Naive thymus-derived CD4-positive, alpha-beta T cell (primary cell): ENCODE measurements at regions of chr4 and their contacts with region 1.

Region 1: GRCh38 chr4:142126890-142127497 is 490.6 kb downstream of the IL15 start:
- DNase-seq: peak in 8 of 9 donors; percentile 30 to 73 (median 66)
- ATAC-seq: peak; percentile 83
- H3K4me3 ChIP-seq: no peak overlapping the region
- H3K4me3 Mint-ChIP-seq: no peak overlapping the region
- H3K27ac ChIP-seq: no peak overlapping the region
- H3K27ac Mint-ChIP-seq: peak overlapping the region in 1 of 9 donors; percentile 22
- H3K4me1 ChIP-seq: peaks cover 0 to 32% of the 10 kb centered on the region in 2 donors
- H3K4me1 Mint-ChIP-seq: peaks cover 10 to 38% (median 37%) of the 10 kb centered on the region in 7 donors
- H3K27me3 ChIP-seq: no peaks in the 10 kb centered on the region
- H3K27me3 Mint-ChIP-seq: no peaks in the 10 kb centered on the region

Region 2: GRCh38 chr4:140861359-140862176 is 1265.4 kb before region 1 on chr4:
- CTCF ChIA-PET with region 1: no interaction called
- POLR2A ChIA-PET with region 1: no interaction called
- intact Hi-C with region 1: loop called in 1 of 2 experiments (anchors 5 kb)
- DNase-seq: peak in 6 of 9 donors; percentile 4 to 49 (median 36)
- ATAC-seq: peak; percentile 66
- H3K4me3 ChIP-seq: no peak overlapping the region
- H3K4me3 Mint-ChIP-seq: no peak overlapping the region
- H3K27ac ChIP-seq: no peak overlapping the region
- H3K27ac Mint-ChIP-seq: no peak overlapping the region
- H3K4me1 ChIP-seq: no peaks in the 10 kb centered on the region
- H3K4me1 Mint-ChIP-seq: peaks cover 0 to 14% (median 5%) of the 10 kb centered on the region in 7 donors
- H3K27me3 ChIP-seq: no peaks in the 10 kb centered on the region
- H3K27me3 Mint-ChIP-seq: peaks cover 18 to 28% (median 23%) of the 10 kb centered on the region in 5 donors

Region 3: DNA sequence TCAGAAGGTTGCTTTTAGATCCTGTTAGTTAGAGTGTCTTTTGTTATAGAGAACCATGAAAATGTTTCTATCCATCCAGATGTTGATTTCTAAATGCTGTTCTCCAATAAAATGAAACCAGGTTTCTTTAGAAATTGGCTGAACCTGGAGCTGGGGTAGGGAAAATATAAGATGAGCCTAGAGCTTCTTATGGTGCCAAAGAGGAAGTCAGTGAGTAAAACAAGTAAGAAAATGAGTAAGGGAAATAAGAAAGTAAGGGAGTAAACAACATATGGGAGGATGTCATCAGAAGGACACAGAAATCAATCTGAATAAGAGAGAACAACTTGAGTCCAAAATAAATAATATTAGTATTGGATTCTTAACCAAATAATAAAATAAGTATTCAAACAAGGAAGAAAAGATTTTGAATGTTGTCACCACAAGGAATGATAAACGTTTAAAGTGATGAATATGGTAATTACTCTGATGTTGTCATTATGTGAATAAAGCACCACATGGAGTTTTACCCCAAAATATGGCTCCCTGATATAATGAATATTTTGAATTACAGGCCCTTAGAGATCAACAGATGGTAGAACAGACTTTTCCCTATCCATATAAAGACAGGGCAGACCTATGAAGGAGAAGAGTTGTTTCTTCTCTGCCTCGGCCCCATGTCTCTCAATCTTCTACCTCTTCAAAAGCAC is 15.5 kb after region 1 on chr4:
- CTCF ChIA-PET with region 1: no interaction called
- POLR2A ChIA-PET with region 1: interaction called, 3 read pairs
- intact Hi-C with region 1: loop called in 1 of 2 experiments (anchors 1 kb)
- DNase-seq: no peak
- ATAC-seq: no peak
- H3K4me3 ChIP-seq: no peak overlapping the region
- H3K4me3 Mint-ChIP-seq: peak overlapping the region in 3 of 10 donors; percentile 0 to 39 (median 8)
- H3K27ac ChIP-seq: no peak overlapping the region
- H3K27ac Mint-ChIP-seq: peak overlapping the region; percentile 28 to 85 (median 63)
- H3K4me1 ChIP-seq: no peaks in the 10 kb centered on the region
- H3K4me1 Mint-ChIP-seq: peaks cover 11 to 53% (median 43%) of the 10 kb centered on the region in 7 donors
- H3K27me3 ChIP-seq: no peaks in the 10 kb centered on the region
- H3K27me3 Mint-ChIP-seq: no peaks in the 10 kb centered on the region

Region 4: GRCh38 chr4:142353149-142353738 is 226.2 kb after region 1 on chr4:
- CTCF ChIA-PET with region 1: interaction called, 3 read pairs
- POLR2A ChIA-PET with region 1: interaction called, 3 read pairs
- intact Hi-C with region 1: loop called (anchors 1 to 5 kb)
- DNase-seq: peak in 6 of 9 donors; percentile 21 to 50 (median 46)
- ATAC-seq: peak; percentile 61
- H3K4me3 ChIP-seq: no peak overlapping the region
- H3K4me3 Mint-ChIP-seq: peak overlapping the region in 9 of 10 donors; percentile 38 to 79 (median 70)
- H3K27ac ChIP-seq: peak overlapping the region; percentile 67
- H3K27ac Mint-ChIP-seq: peak overlapping the region; percentile 68 to 95 (median 92)
- H3K4me1 ChIP-seq: peaks cover 69 to 84% of the 10 kb centered on the region in 2 donors
- H3K4me1 Mint-ChIP-seq: peaks cover 58 to 100% (median 97%) of the 10 kb centered on the region in 7 donors
- H3K27me3 ChIP-seq: no peaks in the 10 kb centered on the region
- H3K27me3 Mint-ChIP-seq: no peaks in the 10 kb centered on the region

Region 5: DNA sequence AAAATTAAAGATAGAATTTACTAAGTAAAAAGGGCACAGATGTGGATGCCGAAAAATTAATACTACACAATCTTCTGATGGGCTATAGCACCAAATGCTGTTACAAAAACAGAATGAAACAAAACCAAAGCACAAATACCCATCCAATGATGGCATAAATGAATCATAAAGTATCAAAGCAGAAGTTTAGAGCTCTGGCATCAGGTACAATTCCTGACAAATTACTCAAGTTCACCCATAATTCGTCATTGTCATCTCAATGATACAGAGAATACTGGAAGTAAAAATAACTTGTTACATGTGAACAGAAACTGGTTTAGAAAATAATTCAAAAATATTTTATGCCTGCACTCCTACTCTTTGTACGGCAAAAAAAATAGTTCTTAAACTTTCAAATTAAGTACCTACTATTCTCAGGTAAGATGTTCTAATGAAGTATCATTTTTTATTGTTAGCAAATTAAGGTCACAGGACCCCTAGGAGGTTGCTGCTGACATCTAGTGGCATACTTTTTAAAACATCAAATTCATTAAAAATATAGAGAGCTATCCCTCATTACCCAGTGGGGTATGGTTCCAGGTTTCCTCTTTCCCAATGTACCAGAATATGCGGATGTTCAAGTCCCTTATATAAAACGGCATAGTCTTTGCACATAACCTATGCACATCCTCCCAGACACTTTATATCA is 593.0 kb after region 1 on chr4:
- CTCF ChIA-PET with region 1: interaction called, 3 read pairs
- POLR2A ChIA-PET with region 1: no interaction called
- intact Hi-C with region 1: loop called (anchors 1 kb)
- DNase-seq: peak in 6 of 9 donors; percentile 22 to 64 (median 58)
- ATAC-seq: peak; percentile 75
- H3K4me3 ChIP-seq: no peak overlapping the region
- H3K4me3 Mint-ChIP-seq: peak overlapping the region in 6 of 10 donors; percentile 16 to 51 (median 37)
- H3K27ac ChIP-seq: peak overlapping the region; percentile 43
- H3K27ac Mint-ChIP-seq: peak overlapping the region in 6 of 9 donors; percentile 43 to 91 (median 68)
- H3K4me1 ChIP-seq: peaks cover 0 to 10% of the 10 kb centered on the region in 2 donors
- H3K4me1 Mint-ChIP-seq: peaks cover 3 to 49% (median 30%) of the 10 kb centered on the region in 7 donors
- H3K27me3 ChIP-seq: no peaks in the 10 kb centered on the region
- H3K27me3 Mint-ChIP-seq: no peaks in the 10 kb centered on the region

Region 6: DNA sequence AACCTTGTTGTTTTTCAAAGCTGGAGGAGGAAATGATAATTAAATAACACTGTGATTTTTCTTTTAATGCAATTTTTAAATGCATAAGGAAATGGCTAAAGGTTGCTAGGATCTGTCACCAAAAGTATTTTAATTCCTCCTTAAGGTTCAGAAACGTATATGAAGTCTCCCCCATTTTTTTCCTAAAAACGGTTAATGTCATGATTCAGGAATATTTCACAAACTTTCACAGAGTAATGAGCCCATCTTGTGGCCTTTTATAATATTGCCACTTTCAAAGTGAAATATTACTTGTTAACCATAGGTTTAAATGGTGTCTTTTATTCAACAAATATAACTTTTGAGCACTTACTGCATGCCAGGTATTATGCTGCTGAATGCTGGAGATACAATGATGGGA is 958.2 kb after region 1 on chr4:
- CTCF ChIA-PET with region 1: no interaction called
- POLR2A ChIA-PET with region 1: no interaction called
- intact Hi-C with region 1: loop called in 1 of 2 experiments (anchors 10 kb)
- DNase-seq: no peak
- ATAC-seq: no peak
- H3K4me3 ChIP-seq: no peak overlapping the region
- H3K4me3 Mint-ChIP-seq: no peak overlapping the region
- H3K27ac ChIP-seq: no peak overlapping the region
- H3K27ac Mint-ChIP-seq: no peak overlapping the region
- H3K4me1 ChIP-seq: no peaks in the 10 kb centered on the region
- H3K4me1 Mint-ChIP-seq: no peaks in the 10 kb centered on the region
- H3K27me3 ChIP-seq: no peaks in the 10 kb centered on the region
- H3K27me3 Mint-ChIP-seq: peaks cover 6 to 25% (median 14%) of the 10 kb centered on the region in 5 donors